Activated T-helper 1 cell treated with anti-CD3 and anti-CD28 coated beads, Interleukin-12 subunit alpha, Interleukin-12 subunit beta, Interleukin-2, Interleukin-4 antibody, amounts not matched to agents 30 ng/mL and 10 ng/mL and 1 ng/mL, durations not matched to agents 14 hours and 24 hours and 36 hours (primary cell): ENCODE measurements at regions of chr13 and their contacts with region 1.

Region 1: DNA sequence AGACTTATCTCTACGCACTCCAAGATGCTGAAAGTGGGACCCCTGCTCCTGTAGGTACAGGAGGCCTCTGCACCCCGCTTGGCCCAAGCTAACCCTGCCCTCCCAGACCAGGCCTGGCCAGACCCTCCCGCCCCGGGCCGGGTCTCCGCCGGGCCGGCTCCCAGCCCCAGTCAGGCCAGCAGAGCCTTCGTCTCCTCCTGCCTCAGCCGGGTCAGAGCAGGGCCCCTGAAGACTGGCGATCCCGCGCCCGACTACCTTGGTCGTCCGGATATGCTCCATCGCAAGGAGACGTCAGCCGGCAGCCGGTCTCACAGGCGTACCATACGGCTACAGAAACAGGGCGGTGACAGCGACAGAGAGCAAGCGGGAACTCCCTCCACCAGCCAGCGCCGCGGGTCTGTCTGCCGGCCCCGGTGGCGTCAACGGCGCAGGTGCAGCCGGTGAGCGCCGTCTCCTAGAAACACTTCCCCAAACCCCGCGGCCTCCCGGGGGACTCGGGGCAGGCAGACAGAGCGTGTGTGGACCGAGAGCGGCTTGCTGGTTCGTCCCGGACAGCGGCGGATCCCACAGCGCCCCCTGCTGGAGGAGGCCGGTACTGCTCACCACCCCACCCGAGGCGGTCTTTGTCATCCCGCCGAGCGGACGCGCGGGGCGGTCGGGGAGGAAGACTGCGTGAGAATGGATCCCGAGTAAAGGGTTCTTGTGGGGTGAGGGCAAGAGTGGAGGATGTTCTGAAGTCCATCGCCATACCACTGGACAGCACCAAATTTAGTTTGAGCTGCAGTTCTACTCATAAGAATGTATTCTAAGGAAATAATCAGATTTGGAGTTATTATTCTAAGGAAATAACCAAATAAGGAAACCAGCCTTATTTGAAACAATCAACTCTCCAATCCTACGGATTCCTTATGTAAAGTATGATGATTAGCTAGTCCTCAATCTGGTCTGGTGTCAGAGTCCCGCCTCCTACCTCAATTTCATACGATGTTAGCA is at the start of gene MTMR6:
- DNase-seq: peak; percentile 90
- H3K4me3 Mint-ChIP-seq: peak within 1 kb of the TSS; percentile 94
- H3K27ac Mint-ChIP-seq: peak within 1 kb of the TSS; percentile 93
- H3K4me1 Mint-ChIP-seq: peaks cover 41% of the 10 kb centered on the region
- H3K27me3 Mint-ChIP-seq: peaks cover 21% of the 10 kb centered on the region
- total RNA-seq, gene MTMR6: 17.0 and 17.9 TPM in 2 replicates

Region 2: DNA sequence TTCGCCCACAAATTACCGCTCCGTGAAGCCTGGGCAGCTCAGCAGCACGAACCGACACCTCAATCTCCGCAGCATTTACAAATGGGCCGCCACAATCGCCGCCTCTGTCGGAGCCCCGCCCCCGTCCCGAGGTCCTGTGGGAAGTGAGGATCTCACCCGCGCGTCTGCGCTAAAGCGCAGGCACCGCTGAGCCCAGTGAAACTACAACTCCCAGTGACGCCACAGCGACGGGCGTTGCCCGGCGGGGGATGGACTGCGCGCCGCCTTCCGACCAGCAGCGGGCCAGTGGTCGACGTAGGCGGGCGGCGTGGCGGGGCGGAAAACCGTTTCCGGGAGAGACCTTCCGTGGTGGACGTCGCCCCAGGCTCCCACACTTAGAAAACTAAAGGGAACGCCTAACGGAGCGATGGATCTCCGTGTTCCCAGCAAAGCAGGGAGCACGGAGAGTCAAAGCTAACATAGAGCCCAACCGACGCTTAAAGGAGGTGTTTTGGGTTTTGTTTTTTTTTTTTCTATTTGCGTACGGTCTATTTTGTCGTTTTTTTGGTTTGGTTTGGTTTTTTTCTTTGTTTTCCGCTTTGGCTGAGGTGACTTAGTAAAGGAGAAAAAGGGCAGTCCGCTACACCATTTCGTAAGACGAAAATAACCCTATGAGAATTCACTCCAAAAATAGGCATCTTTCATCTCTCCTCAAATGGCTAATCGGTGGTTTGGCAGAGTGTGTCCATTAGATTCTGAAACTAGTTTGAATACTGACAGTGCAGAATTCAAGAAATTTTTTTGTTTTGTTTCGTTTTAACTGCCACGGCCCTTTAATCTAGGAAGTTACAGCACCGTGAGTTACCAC is 364.3 kb before region 1 on chr13:
- intact Hi-C with region 1: loop called (anchors 5 kb)
- DNase-seq: peak; percentile 95
- H3K4me3 Mint-ChIP-seq: peak overlapping the region; percentile 95
- H3K27ac Mint-ChIP-seq: peak overlapping the region; percentile 92
- H3K4me1 Mint-ChIP-seq: peaks cover 14% of the 10 kb centered on the region
- H3K27me3 Mint-ChIP-seq: peaks cover 2% of the 10 kb centered on the region

Region 3: GRCh38 chr13:25267715-25268114 is 19.6 kb before region 1 on chr13:
- intact Hi-C with region 1: loop called (anchors 2 kb)
- DNase-seq: no peak
- H3K4me3 Mint-ChIP-seq: no peak overlapping the region
- H3K27ac Mint-ChIP-seq: no peak overlapping the region
- H3K4me1 Mint-ChIP-seq: no peaks in the 10 kb centered on the region
- H3K27me3 Mint-ChIP-seq: no peaks in the 10 kb centered on the region

Region 4: DNA sequence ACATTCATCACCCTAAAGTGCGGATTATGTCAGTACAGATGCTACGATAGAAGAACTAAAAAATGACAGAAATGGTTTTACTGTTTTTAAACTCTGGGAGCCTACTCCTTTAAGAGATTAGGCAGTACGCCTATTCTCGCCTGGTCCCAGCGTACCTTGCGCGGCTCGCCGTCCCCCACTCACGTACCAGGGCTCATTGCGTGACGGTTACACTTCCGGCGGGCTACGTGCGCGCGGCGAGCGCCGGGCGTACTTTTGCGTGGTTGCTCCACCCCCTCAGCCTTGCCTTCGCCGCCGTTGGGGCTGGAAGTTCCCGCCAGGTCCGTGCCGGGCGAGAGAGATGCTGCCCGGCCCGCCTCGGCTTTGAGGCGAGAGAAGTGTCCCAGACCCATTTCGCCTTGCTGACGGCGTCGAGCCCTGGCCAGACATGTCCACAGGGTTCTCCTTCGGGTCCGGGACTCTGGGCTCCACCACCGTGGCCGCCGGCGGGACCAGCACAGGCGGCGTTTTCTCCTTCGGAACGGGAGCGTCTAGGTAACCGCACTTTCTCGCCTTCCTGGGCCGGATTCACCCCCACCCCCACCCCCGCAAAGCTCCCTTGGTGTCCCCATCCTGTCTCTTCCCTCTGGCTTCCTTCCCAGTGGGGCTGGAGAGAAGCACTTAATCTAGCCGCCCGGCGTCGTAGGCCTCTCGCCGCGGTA is 14.2 kb after region 1 on chr13 and contains the start of gene NUP58:
- intact Hi-C with region 1: loop called (anchors 1 kb)
- DNase-seq: peak; percentile 94
- H3K4me3 Mint-ChIP-seq: peak within 1 kb of the TSS; percentile 96
- H3K27ac Mint-ChIP-seq: peak within 1 kb of the TSS; percentile 94
- H3K4me1 Mint-ChIP-seq: peaks cover 35% of the 10 kb centered on the region
- H3K27me3 Mint-ChIP-seq: peaks cover 5% of the 10 kb centered on the region
- total RNA-seq, gene NUP58: 131 and 142 TPM in 2 replicates

Region 5: GRCh38 chr13:25561812-25562211 is 274.5 kb after region 1 on chr13:
- intact Hi-C with region 1: no loop called
- DNase-seq: no peak
- H3K4me3 Mint-ChIP-seq: no peak overlapping the region
- H3K27ac Mint-ChIP-seq: no peak overlapping the region
- H3K4me1 Mint-ChIP-seq: no peaks in the 10 kb centered on the region
- H3K27me3 Mint-ChIP-seq: peaks cover 15% of the 10 kb centered on the region

Region 6: GRCh38 chr13:25585000-25585399 is 297.7 kb after region 1 on chr13:
- intact Hi-C with region 1: no loop called
- DNase-seq: no peak
- H3K4me3 Mint-ChIP-seq: no peak overlapping the region
- H3K27ac Mint-ChIP-seq: no peak overlapping the region
- H3K4me1 Mint-ChIP-seq: peaks cover 7% of the 10 kb centered on the region
- H3K27me3 Mint-ChIP-seq: peaks cover 27% of the 10 kb centered on the region

Region 7: GRCh38 chr13:25707726-25708125 is 420.5 kb after region 1 on chr13:
- intact Hi-C with region 1: no loop called
- DNase-seq: no peak
- H3K4me3 Mint-ChIP-seq: no peak overlapping the region
- H3K27ac Mint-ChIP-seq: no peak overlapping the region
- H3K4me1 Mint-ChIP-seq: no peaks in the 10 kb centered on the region
- H3K27me3 Mint-ChIP-seq: peaks cover 14% of the 10 kb centered on the region

Region 8: GRCh38 chr13:26051657-26052311 is 764.5 kb after region 1 on chr13 and contains the start of gene SHISA2:
- intact Hi-C with region 1: loop called (anchors 5 kb)
- DNase-seq: peak; percentile 15
- H3K4me3 Mint-ChIP-seq: peak within 1 kb of the TSS; percentile 81
- H3K27ac Mint-ChIP-seq: peak within 1 kb of the TSS; percentile 72
- H3K4me1 Mint-ChIP-seq: peaks cover 35% of the 10 kb centered on the region
- H3K27me3 Mint-ChIP-seq: peaks cover 49% of the 10 kb centered on the region
- total RNA-seq, gene SHISA2: 9.4 and 9.5 TPM in 2 replicates